Adrenal gland (tissue), 19 donors: ENCODE measurements at regions of chr11 and their contacts with region 1.

Region 1: DNA sequence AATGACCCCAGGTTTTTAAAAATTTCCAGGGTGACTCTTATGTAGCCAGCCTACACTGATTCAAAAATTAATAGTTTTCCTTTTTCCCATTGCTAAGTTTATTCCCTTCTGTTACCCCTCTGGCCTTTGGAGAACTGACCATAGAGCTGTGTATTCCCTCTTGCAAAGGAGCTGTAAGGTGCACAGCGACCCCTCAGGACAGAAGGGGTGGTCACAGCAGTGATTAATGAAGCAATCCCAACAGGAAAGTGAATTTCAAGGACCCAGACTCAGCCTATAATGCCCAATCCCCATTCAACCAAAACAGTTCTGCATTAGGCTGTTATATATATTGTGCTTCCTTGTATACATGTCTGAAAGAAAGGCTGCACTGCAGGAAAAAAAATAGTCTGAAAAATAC is 147.1 kb downstream of the WT1 start:
- DNase-seq: no peak
- H3K4me3 ChIP-seq: no peak overlapping the region
- H3K27ac ChIP-seq: no peak overlapping the region
- H3K4me1 ChIP-seq: no peaks in the 10 kb centered on the region
- H3K27me3 ChIP-seq: peaks cover 4% of the 10 kb centered on the region
- CTCF ChIP-seq: no peak
- POLR2A ChIP-seq: no peak

Region 2: GRCh38 chr11:32105871-32106560 is 182.3 kb before region 1 on chr11:
- intact Hi-C with region 1: no loop called
- DNase-seq: no peak
- H3K4me3 ChIP-seq: no peak overlapping the region
- H3K27ac ChIP-seq: no peak overlapping the region
- H3K4me1 ChIP-seq: no peaks in the 10 kb centered on the region
- H3K27me3 ChIP-seq: no peaks in the 10 kb centered on the region
- CTCF ChIP-seq: no peak
- POLR2A ChIP-seq: no peak

Region 3: DNA sequence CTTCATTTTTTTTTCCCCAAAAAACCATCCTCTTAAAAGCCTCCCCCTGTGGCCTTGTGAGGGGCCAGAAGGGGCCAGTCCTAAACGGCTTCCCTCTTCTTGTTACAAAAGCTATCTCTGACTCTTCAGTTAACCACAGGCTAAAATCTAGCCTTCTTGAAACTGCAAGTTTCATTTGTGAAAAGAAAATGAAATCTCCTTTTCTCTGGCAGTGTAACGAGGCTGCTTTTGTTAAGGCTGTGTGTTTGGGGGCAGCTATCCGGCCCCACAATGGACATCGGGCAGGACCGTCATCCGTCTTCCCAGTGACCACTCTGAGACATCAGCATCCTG is 103.6 kb before region 1 on chr11:
- intact Hi-C with region 1: loop called in 1 of 2 experiments (anchors 5 kb)
- DNase-seq: no peak
- H3K4me3 ChIP-seq: no peak overlapping the region
- H3K27ac ChIP-seq: no peak overlapping the region
- H3K4me1 ChIP-seq: no peaks in the 10 kb centered on the region
- H3K27me3 ChIP-seq: no peaks in the 10 kb centered on the region
- CTCF ChIP-seq: no peak
- POLR2A ChIP-seq: no peak